Activated CD8-positive, alpha-beta T cell treated with anti-CD3 and anti-CD28 coated beads, Interleukin-2, amount 10 ng/mL, durations not matched to agents 7 days and 5 days (primary cell): ENCODE measurements at regions of chr14 and their contacts with region 1.

Region 1: GRCh38 chr14:76767681-76768656 is 6.7 kb downstream of the VASH1 start:
- DNase-seq: peak; percentile 73
- ATAC-seq: peak; percentile 97
- H3K4me3 Mint-ChIP-seq: peak overlapping the region; percentile 23
- H3K27ac Mint-ChIP-seq: peak overlapping the region; percentile 70
- H3K4me1 Mint-ChIP-seq: peaks cover 19% of the 10 kb centered on the region
- H3K27me3 Mint-ChIP-seq: peaks cover 20% of the 10 kb centered on the region

Region 2: DNA sequence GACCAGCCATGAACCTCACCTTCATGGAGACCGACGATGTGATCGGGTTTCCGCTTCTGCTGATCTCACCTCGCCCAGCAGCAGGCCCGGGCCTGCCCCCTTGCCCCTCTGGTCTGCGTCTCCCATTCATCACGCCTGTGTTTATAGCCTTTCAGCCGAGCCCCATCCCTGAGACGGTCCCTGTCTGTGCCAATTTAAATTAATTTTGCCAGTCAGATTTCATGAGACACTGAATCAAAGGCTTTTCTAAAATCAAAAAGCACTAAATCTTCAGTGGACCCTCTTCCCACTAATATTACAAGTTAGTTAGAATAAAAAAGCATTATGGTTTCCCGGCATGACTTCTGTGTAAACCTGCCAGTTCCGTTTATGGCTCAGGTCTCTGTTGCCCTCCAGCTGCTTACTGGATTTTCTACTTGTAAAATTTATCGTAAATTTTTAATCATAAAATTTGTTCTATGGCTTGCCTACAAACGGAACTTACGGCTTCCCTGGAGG is 236.1 kb before region 1 on chr14:
- CTCF ChIA-PET with region 1: no interaction called
- POLR2A ChIA-PET with region 1: no interaction called
- DNase-seq: no peak
- ATAC-seq: no peak
- H3K4me3 Mint-ChIP-seq: no peak overlapping the region
- H3K27ac Mint-ChIP-seq: no peak overlapping the region
- H3K4me1 Mint-ChIP-seq: peaks cover 2% of the 10 kb centered on the region
- H3K27me3 Mint-ChIP-seq: peaks cover 5% of the 10 kb centered on the region

Region 3: GRCh38 chr14:76784266-76785264 is 16.6 kb after region 1 on chr14:
- CTCF ChIA-PET with region 1: interaction called, 17 read pairs
- POLR2A ChIA-PET with region 1: interaction called, 5 read pairs
- DNase-seq: peak; percentile 68
- ATAC-seq: peak; percentile 81
- H3K4me3 Mint-ChIP-seq: no peak overlapping the region
- H3K27ac Mint-ChIP-seq: peak overlapping the region; percentile 12
- H3K4me1 Mint-ChIP-seq: peaks cover 50% of the 10 kb centered on the region
- H3K27me3 Mint-ChIP-seq: no peaks in the 10 kb centered on the region